PC-3 (cell line): ENCODE measurements at regions of chr2 and their contacts with region 1.

Region 1: DNA sequence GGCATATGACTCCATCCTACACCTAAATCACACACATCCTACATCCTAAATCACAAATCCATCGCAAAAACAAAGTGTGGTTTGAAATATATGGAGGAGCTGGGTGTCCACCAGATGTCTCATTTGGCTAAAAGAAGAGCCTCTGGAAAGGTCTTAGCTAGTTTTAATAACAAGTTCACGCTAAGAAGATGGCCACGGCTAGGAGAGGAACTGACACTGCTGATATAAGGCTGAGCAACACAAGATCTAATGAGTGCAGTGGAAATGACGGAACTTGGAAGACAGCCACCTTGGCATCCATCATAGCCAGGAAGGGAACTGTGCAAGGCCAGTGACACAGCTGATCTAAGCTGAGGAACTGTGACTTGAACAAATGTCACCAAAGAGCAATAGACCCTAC is 60.0 kb upstream of the AGAP1 start:
- DNase-seq: peak; percentile 61
- ATAC-seq: peak; percentile 88
- H3K4me3 ChIP-seq: no peak overlapping the region
- H3K27ac ChIP-seq: no peak overlapping the region
- H3K4me1 ChIP-seq: no peaks in the 10 kb centered on the region
- H3K27me3 ChIP-seq: no peaks in the 10 kb centered on the region
- CTCF ChIP-seq: peak; percentile 31; the same call in 1 of the 2 replicates

Region 2: DNA sequence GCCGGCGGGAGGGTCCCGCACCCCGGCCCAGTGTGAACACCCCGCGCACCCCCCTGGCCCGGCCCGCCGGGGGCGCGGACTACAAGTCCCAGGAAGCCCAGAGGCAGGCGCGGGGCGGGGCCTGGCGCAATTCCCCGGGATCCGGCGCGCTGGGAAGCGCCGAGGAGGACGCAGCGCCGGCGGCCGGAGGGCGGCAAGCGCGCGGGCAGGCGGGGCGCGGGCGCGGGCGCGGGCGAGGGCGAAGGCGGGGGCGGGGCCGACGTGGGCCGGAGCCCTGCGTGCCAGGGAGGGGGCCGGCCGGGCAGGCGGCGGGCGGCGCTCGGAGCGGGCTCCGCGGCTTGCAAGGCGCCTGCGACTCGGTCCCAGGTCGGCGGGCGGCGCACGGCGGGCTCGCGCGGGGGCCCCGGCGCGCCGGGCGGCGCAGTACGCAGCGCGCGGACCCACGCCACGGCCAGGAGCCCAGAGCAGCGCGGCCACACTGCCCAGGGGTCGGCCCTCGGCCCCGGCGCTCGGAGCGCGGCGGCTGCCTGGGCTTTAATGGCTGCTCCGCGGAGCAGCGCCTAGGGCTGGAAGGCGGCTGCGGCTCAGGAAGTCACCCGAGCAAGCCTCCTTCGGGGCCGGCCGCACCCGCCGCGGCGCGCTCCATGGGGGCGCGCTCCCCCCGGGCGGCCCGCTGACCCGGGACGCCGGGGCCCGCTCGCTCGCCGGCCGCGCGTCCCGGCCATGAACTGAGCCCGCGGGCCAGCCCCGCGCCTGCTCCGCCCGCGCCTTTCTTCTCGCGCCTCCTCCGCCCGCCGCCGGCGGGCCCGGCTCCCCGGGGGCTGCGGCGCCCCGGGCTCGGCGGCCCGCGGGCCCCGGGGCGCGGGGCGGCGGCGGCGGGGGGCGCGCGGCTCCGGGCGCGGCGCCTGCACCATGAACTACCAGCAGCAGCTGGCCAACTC is 60.2 kb after region 1 on chr2 and contains the start of gene AGAP1:
- CTCF ChIA-PET with region 1: no interaction called
- POLR2A ChIA-PET with region 1: no interaction called
- intact Hi-C with region 1: loop called (anchors 1 kb)
- DNase-seq: peak; percentile 90
- ATAC-seq: peak; percentile 80
- H3K4me3 ChIP-seq: peak within 1 kb of the TSS; percentile 81
- H3K27ac ChIP-seq: peak within 1 kb of the TSS; percentile 54
- H3K4me1 ChIP-seq: peaks cover 20% of the 10 kb centered on the region
- H3K27me3 ChIP-seq: no peaks in the 10 kb centered on the region
- CTCF ChIP-seq: no peak
- total RNA-seq, gene AGAP1: 28.6 and 31.0 TPM in 2 replicates

Region 3: DNA sequence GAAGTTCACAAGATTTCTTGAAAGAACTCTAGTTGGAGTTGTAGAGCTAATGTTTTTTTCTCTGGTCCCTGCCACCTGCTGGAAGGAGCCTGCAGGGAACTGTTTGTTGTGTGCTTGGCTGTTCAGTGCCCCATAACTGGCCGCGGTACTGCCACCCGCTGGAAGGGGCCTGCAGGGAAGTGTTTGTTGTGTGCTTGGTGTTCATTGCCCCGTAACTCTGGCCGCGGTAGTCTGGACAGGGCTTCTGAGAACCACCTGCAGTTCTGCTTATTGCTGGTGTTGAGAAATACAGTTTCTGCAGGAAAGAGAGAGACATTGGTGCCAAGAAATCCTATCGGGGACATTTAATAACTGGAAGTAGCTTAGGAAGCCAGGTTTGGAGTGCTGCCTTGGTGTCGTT is 118.1 kb after region 1 on chr2:
- CTCF ChIA-PET with region 1: interaction called, 21 read pairs
- POLR2A ChIA-PET with region 1: no interaction called
- intact Hi-C with region 1: loop called (anchors 1 kb)
- DNase-seq: peak; percentile 71
- ATAC-seq: peak; percentile 98
- H3K4me3 ChIP-seq: no peak overlapping the region
- H3K27ac ChIP-seq: no peak overlapping the region
- H3K4me1 ChIP-seq: peaks cover 8% of the 10 kb centered on the region; the same call in 1 of the 2 replicates
- H3K27me3 ChIP-seq: no peaks in the 10 kb centered on the region
- CTCF ChIP-seq: peak; percentile 83